A549 (cell line): ENCODE measurements at regions of chr2 and their contacts with region 1.

Region 1: DNA sequence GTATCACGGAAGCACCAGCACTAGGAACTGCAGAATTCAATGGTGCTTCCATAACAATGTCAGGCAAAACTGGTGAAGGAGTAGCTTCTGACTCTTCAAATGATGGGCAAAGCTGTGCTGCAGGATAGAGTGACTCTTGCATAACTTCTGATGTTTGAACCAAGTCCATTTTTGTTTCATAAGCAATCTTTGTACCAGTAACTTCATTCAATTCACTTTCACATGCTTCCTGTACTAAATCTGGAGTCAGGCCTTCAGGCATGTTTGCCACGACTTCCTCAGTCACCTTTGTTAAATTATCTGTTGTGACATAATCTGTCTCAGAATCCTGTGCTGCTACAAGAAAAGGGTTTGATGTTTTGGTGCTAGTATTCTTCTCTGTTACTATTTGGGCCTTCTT is 24.0 kb downstream of the RTN4 start:
- DNase-seq: no peak
- ATAC-seq: peak; percentile 23 to 27; a peak in 3 of 6 replicates
- H3K4me3 ChIP-seq: no peak overlapping the region
- H3K27ac ChIP-seq: no peak overlapping the region
- H3K4me1 ChIP-seq: peaks cover 49% of the 10 kb centered on the region
- CTCF ChIP-seq: no peak
- EP300 ChIP-seq: no peak
- POLR2A ChIP-seq: no peak
- RAD21 ChIP-seq: no peak

Region 2: DNA sequence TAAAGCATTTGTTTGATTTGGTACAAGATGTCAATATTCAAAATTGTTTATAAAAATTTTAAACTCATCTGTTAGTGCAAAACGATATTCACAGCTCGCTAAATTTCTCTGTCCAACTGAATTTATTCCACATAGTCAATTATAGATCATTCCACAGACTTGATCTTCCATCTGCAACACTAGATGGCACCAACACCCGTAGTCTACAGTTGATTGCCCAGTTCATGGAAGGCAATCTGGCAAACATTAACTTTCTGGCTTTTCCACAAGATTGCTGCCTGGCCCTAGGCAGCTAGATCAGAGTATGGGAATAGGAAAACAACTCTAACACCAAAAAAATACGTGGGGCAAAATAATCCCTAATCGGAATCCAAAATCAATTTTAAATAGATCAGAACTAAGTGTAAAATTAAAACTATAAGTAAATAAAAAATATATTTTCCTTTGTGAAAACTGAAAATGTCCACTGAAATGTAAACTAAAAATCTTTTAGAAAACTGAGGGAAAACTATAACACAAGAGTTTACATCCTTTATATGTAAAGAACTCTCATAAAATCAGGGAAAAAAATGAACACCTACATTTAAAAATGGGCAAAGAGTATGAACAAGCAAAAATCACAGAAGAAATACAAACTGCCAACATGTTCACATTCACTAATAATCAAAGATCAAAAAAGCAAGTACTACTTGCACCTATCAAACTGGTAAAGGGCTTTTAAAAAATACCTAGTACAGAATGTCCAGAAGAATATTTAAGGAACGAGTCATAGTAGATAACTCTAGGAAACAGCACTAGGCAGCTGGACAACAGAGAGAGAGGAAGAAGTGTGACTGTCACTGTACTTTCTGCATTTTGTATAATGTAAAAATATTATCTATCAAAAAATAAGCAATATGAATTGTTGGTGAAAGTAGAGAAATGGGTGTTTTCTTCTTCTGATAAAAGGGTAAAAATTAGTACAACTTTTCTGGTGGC is 11.0 kb before region 1 on chr2:
- CTCF ChIA-PET with region 1: interaction called, 24 read pairs
- POLR2A ChIA-PET with region 1: no interaction called
- DNase-seq: peak; percentile 71 to 89
- ATAC-seq: peak; percentile 83 to 88
- H3K4me3 ChIP-seq: no peak overlapping the region
- H3K27ac ChIP-seq: peak overlapping the region; percentile 3 to 32; a peak in 2 of 6 replicates
- H3K4me1 ChIP-seq: peaks cover 86% of the 10 kb centered on the region
- CTCF ChIP-seq: peak; percentile 93
- EP300 ChIP-seq: no peak
- POLR2A ChIP-seq: no peak
- RAD21 ChIP-seq: peak; percentile 91 to 95